MCF 10A (cell line): ENCODE measurements at regions of chr16 and their contacts with region 1.

Region 1: GRCh38 chr16:46689365-46690280 is at the start of gene ORC6:
- DNase-seq: peak; percentile 97
- H3K4me3 Mint-ChIP-seq: no peak within 1 kb of the TSS
- H3K27ac Mint-ChIP-seq: no peak within 1 kb of the TSS
- H3K4me1 Mint-ChIP-seq: peaks cover 41% of the 10 kb centered on the region
- H3K27me3 Mint-ChIP-seq: no peaks in the 10 kb centered on the region
- CTCF ChIP-seq: peak; percentile 31
- total RNA-seq, gene ORC6: 17.0 and 23.2 TPM in 2 replicates

Region 2: DNA sequence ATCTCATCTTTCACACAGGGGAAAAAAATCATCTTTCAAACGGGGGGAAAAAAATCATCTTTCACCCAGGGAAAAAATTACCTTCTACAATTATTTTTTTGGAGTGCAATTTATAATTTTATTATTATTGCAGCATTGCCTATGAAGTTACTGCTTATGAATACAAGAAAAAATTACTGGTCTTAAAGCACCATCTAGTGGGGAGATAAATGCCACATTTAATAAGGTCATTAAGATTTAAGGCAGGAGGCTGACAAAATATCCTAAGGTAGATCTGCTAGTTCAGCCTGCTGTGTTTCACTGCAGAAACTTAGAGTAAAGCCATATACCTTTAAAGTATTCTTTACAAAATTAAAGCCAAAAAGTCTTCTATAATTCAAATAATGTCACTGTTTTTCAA is 82.1 kb before region 1 on chr16:
- CTCF ChIA-PET with region 1: no interaction called
- POLR2A ChIA-PET with region 1: no interaction called
- intact Hi-C with region 1: no loop called
- DNase-seq: peak; percentile 49
- H3K4me3 Mint-ChIP-seq: no peak overlapping the region
- H3K27ac Mint-ChIP-seq: no peak overlapping the region
- H3K4me1 Mint-ChIP-seq: no peaks in the 10 kb centered on the region
- H3K27me3 Mint-ChIP-seq: no peaks in the 10 kb centered on the region
- CTCF ChIP-seq: peak; percentile 26

Region 3: GRCh38 chr16:46629331-46630219 is 60.0 kb before region 1 on chr16:
- CTCF ChIA-PET with region 1: interaction called, 9 read pairs
- POLR2A ChIA-PET with region 1: no interaction called
- intact Hi-C with region 1: loop called (anchors 2 kb)
- DNase-seq: peak; percentile 68
- H3K4me3 Mint-ChIP-seq: peak overlapping the region; percentile 22
- H3K27ac Mint-ChIP-seq: peak overlapping the region; percentile 61
- H3K4me1 Mint-ChIP-seq: peaks cover 11% of the 10 kb centered on the region
- H3K27me3 Mint-ChIP-seq: peaks cover 6% of the 10 kb centered on the region
- CTCF ChIP-seq: peak; percentile 50

Region 4: GRCh38 chr16:46673320-46674013 is 16.2 kb before region 1 on chr16:
- CTCF ChIA-PET with region 1: interaction called, 34 read pairs
- POLR2A ChIA-PET with region 1: interaction called, 5 read pairs
- intact Hi-C with region 1: loop called (anchors 2 kb)
- DNase-seq: peak; percentile 69
- H3K4me3 Mint-ChIP-seq: no peak overlapping the region
- H3K27ac Mint-ChIP-seq: no peak overlapping the region
- H3K4me1 Mint-ChIP-seq: no peaks in the 10 kb centered on the region
- H3K27me3 Mint-ChIP-seq: no peaks in the 10 kb centered on the region
- CTCF ChIP-seq: peak; percentile 89

Region 5: GRCh38 chr16:46701615-46702014 is 12.0 kb after region 1 on chr16:
- CTCF ChIA-PET with region 1: interaction called, 25 read pairs
- POLR2A ChIA-PET with region 1: interaction called, 3 read pairs
- intact Hi-C with region 1: no loop called
- DNase-seq: no peak
- H3K4me3 Mint-ChIP-seq: no peak overlapping the region
- H3K27ac Mint-ChIP-seq: no peak overlapping the region
- H3K4me1 Mint-ChIP-seq: no peaks in the 10 kb centered on the region
- H3K27me3 Mint-ChIP-seq: no peaks in the 10 kb centered on the region
- CTCF ChIP-seq: no peak

Region 6: DNA sequence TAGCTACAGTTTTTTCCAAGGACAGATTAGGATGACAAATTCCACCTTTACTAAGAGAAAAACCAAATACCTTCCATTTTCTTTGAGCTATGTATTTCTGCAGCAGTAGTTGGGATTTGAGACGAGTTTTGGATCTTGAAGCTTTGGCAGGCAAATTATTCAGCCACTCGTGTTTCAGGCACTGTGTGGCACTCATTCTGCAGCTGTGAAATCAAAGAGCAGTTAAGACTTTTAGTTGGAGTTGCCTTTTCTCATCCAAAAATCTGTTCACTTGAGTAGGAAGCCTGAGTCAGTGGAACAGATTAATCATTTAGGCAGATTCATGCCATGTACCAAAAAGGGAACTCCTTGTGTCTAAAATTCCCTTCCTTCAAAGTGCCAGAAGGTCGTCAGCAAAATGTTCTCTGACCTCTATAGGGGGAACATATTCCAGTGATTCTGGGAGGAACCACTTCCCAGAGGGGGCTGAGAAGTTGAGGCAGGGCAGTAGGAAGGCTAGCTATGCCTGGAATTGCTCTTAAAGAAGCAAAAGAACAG is 19.9 kb after region 1 on chr16:
- CTCF ChIA-PET with region 1: interaction called, 25 read pairs
- POLR2A ChIA-PET with region 1: no interaction called
- intact Hi-C with region 1: no loop called
- DNase-seq: no peak
- H3K4me3 Mint-ChIP-seq: no peak overlapping the region
- H3K27ac Mint-ChIP-seq: no peak overlapping the region
- H3K4me1 Mint-ChIP-seq: no peaks in the 10 kb centered on the region
- H3K27me3 Mint-ChIP-seq: no peaks in the 10 kb centered on the region
- CTCF ChIP-seq: no peak

Region 7: DNA sequence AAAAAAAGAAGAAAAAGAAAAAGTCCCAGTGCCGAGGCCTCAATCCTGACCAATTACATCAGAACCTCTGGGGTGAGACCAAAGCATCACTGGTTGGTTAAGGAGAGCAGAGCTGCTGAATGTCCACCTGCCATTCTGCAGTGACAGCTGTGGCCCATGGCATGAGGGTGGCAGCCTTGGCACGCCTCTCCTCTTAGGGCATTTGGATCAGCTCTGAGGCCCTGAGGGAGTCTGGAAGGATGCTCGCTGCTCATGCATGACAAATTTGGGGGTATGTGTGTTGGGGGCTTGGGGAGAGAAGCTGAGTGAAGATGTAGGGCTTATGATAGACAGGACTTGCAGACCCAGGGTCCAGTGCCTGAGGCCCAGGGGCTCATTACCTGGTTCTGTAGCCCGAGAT is 32.3 kb after region 1 on chr16:
- CTCF ChIA-PET with region 1: no interaction called
- POLR2A ChIA-PET with region 1: no interaction called
- intact Hi-C with region 1: no loop called
- DNase-seq: no peak
- H3K4me3 Mint-ChIP-seq: no peak overlapping the region
- H3K27ac Mint-ChIP-seq: no peak overlapping the region
- H3K4me1 Mint-ChIP-seq: no peaks in the 10 kb centered on the region
- H3K27me3 Mint-ChIP-seq: no peaks in the 10 kb centered on the region
- CTCF ChIP-seq: no peak

Region 8: GRCh38 chr16:46801428-46802049 is 111.9 kb after region 1 on chr16:
- CTCF ChIA-PET with region 1: interaction called, 33 read pairs
- POLR2A ChIA-PET with region 1: interaction called, 5 read pairs
- intact Hi-C with region 1: loop called (anchors 5 kb)
- DNase-seq: peak; percentile 31
- H3K4me3 Mint-ChIP-seq: no peak overlapping the region
- H3K27ac Mint-ChIP-seq: no peak overlapping the region
- H3K4me1 Mint-ChIP-seq: peaks cover 6% of the 10 kb centered on the region
- H3K27me3 Mint-ChIP-seq: no peaks in the 10 kb centered on the region
- CTCF ChIP-seq: peak; percentile 21

Region 9: GRCh38 chr16:46973207-46973995 is 283.8 kb after region 1 on chr16 and contains the start of gene DNAJA2:
- CTCF ChIA-PET with region 1: no interaction called
- POLR2A ChIA-PET with region 1: interaction called, 4 read pairs
- intact Hi-C with region 1: loop called (anchors 5 kb)
- DNase-seq: peak; percentile 87
- H3K4me3 Mint-ChIP-seq: peak within 1 kb of the TSS; percentile 74
- H3K27ac Mint-ChIP-seq: peak within 1 kb of the TSS; percentile 96
- H3K4me1 Mint-ChIP-seq: peaks cover 12% of the 10 kb centered on the region
- H3K27me3 Mint-ChIP-seq: no peaks in the 10 kb centered on the region
- CTCF ChIP-seq: no peak
- total RNA-seq, gene DNAJA2: 64.7 and 64.8 TPM in 2 replicates